ENCODE measurements at regions of chr6 and their contacts with region 1.

Region 1: DNA sequence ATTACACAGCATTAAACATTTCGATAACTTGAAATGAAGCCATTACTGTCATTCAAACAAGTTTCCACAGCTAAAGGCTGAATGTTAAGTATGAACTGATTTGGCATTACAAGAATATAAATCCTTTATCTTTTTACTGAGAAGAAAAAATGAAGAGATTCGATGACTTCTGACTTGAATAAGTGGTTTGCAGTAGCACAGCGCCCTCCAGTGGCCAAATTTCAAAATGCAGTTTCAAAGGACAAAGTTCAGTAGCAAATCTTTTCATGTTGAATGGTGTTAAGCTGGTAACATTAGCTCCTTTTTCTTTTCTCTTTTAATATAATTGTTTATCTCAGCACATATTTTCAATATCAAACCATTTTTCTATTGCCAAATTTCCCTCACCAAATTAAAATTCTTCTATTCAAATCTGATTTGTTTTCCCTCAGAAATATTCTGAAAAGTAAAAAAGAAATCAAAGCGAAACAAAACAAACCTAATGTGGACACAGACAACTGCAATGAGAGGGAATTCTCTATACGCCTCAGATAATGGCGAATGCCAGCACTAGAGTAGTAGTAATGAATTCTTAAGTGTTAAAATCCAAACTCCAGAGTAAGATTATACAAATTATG is 145.7 kb downstream of the BTBD9 start:
- DNase-seq: peak; percentile 78
- H3K4me3 Mint-ChIP-seq: no peak overlapping the region
- H3K27ac Mint-ChIP-seq: no peak overlapping the region
- H3K4me1 Mint-ChIP-seq: peaks cover 7% of the 10 kb centered on the region
- H3K27me3 Mint-ChIP-seq: no peaks in the 10 kb centered on the region
- CTCF ChIP-seq: peak; percentile 92

Region 2: DNA sequence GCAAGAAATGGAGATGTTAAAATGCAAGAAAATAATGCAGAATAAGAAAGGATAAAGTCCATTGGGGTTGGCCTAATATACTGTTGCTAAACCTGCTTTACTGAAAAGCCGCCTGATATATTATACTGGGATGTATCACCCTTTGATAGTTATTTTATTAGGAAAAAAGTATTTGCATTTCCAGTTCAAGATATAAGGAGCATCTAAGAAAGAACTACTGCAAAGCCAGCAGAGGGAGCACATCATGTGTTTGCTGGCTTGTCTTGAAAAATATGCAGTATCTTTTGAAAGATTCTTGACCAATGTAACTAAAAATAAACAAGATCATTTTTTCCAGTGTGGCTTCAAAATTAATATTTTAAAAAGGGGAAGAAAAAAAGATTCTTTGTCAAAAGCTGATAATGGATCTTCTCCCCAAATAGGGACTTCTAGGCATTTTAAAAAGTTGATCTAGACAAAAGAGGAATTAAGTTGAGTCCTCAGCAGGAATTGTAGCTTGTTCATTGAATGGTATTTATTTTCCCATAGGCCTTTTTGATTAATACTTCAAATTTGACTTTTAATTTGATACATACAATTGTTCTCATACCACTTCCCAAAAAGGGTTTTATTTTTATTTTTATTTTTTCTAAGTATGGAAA is 459.6 kb before region 1 on chr6:
- CTCF ChIA-PET with region 1: interaction called, 10 read pairs
- intact Hi-C with region 1: loop called (anchors 1 kb)
- DNase-seq: no peak
- H3K4me3 Mint-ChIP-seq: no peak overlapping the region
- H3K27ac Mint-ChIP-seq: no peak overlapping the region
- H3K4me1 Mint-ChIP-seq: peaks cover 27% of the 10 kb centered on the region
- H3K27me3 Mint-ChIP-seq: no peaks in the 10 kb centered on the region
- CTCF ChIP-seq: peak; percentile 25

Region 3: GRCh38 chr6:39124114-39124513 is 630.1 kb after region 1 on chr6:
- CTCF ChIA-PET with region 1: no interaction called
- intact Hi-C with region 1: no loop called
- DNase-seq: no peak
- H3K4me3 Mint-ChIP-seq: no peak overlapping the region
- H3K27ac Mint-ChIP-seq: no peak overlapping the region
- H3K4me1 Mint-ChIP-seq: no peaks in the 10 kb centered on the region
- H3K27me3 Mint-ChIP-seq: peaks cover 56% of the 10 kb centered on the region
- CTCF ChIP-seq: no peak